Heart right ventricle (tissue), 16 donors: ENCODE measurements at regions of chr1 and their contacts with region 1.

Region 1: DNA sequence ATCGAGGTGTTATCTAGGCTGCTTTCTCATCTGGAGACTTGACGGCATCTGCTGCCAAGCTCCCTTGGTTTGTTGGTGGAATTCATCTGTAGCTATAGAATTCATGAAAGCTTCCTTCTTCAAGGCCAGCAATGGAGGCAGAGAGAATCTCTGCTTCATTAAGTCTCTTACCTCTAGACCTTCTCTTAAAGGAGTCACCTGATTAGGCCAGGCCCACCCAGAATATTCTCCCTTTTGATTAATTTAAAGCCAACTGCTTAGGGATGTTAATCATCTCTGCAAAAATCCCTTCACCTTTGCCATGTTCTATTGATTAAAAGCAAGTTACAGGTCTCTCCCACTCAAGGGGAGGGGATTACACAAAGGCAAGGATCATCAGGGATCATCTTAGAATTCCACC is 5.3 kb upstream of the NCF2 start:
- DNase-seq: no peak
- ATAC-seq: no peak
- H3K4me3 ChIP-seq: no peak overlapping the region
- H3K27ac ChIP-seq: no peak overlapping the region
- H3K4me1 ChIP-seq: peaks cover 0 to 68% (median 5%) of the 10 kb centered on the region in 9 donors
- H3K27me3 ChIP-seq: no peaks in the 10 kb centered on the region
- CTCF ChIP-seq: no peak

Region 2: GRCh38 chr1:183543619-183544204 is 51.8 kb before region 1 on chr1:
- intact Hi-C with region 1: no loop called
- DNase-seq: peak in 1 of 2 donors; percentile 20
- ATAC-seq: peak; percentile 72 to 83 (median 78)
- H3K4me3 ChIP-seq: no peak overlapping the region
- H3K27ac ChIP-seq: peak overlapping the region in 1 of 10 donors; percentile 54
- H3K4me1 ChIP-seq: peaks cover 0 to 43% (median 19%) of the 10 kb centered on the region in 9 donors
- H3K27me3 ChIP-seq: no peaks in the 10 kb centered on the region
- CTCF ChIP-seq: peak; percentile 16 to 73 (median 65)

Region 3: DNA sequence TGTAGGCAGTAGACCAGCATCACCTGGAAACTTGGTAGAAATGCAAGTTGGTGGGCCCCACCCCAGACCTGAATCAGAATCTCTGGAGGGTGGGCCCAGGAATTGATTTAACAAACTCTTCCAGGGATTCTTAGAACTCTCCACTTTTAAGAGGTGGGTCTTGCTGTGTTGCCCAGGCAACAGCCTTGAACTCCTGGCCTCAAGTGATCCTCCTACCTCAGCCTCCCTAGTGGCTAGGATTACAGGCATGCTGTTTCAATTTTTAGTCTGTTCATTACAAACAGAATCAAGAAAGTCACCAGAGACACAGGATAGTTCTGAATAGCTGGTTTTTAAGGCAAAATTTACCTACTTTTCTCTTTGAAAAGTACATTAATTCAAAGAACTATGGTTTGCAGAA is 36.5 kb before region 1 on chr1:
- intact Hi-C with region 1: no loop called
- DNase-seq: no peak
- ATAC-seq: no peak
- H3K4me3 ChIP-seq: no peak overlapping the region
- H3K27ac ChIP-seq: no peak overlapping the region
- H3K4me1 ChIP-seq: no peaks in the 10 kb centered on the region
- H3K27me3 ChIP-seq: no peaks in the 10 kb centered on the region
- CTCF ChIP-seq: no peak

Region 4: DNA sequence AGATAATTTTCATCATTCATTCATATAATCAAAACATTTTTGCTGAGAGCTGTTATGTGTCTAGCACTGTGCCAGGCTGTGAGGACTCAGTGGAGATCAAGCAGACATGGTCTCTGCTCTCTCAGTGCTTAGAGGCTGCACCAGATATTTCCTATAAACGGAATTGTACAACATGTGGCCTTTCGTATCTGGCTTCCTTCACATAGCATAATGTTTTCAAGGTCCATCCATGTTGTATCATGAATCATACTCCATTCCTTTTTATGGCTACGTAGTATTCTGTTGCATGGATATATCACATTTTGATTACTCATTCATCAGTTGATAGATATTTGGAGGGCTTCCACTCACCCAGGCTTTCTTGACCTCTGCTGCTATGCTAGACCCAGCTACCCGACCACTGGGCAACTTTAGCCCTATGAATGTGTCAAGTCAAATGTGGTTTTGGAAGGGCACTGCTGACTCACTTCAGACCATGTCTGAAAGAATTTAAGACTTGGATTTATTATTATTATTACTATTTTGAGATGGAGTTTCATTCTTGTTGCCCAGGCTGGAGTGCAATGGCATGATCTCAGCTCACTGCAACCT is 23.8 kb before region 1 on chr1:
- intact Hi-C with region 1: loop called in 1 of 10 experiments (anchors 2 kb)
- DNase-seq: no peak
- ATAC-seq: no peak
- H3K4me3 ChIP-seq: no peak overlapping the region
- H3K27ac ChIP-seq: no peak overlapping the region
- H3K4me1 ChIP-seq: peaks cover 0 to 41% (median 18%) of the 10 kb centered on the region in 9 donors
- H3K27me3 ChIP-seq: no peaks in the 10 kb centered on the region
- CTCF ChIP-seq: no peak

Region 5: DNA sequence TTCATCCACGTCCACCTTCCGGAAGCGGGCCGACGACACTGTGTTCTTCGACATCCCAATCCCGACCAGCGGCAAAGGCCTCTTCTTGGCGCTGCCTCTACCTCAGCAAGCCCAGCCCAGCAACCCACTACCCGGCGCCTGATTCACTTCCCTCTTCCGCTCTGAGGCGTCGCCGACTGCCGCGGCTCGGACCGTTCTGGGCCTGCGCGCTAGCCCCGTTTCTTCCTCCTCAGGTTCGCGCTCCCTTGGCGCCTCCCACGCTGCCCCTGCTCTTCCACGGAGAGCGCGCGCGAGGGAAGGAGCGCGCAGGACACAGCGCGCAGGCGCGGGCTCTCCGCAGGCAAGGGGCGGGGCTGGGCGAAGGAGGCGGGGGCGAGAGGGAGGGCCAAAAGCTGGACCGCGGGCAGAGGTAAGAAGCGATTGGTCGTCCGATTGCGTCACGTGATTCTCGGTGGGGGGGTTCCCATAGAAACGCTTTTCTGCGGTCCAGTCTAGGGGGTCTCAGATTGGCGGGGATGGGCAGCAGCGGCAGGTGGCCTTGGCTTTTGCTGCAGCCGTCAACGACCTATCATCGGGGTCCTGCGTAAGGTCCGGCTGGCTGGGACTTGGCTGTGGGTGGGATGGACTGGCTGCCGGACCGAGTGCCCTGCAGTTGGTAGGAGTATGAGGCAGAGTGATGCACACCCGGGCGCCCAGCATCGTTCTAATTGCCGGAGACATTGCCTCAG is 40.2 kb after region 1 on chr1 and contains the start of gene ARPC5:
- intact Hi-C with region 1: no loop called
- DNase-seq: peak; percentile 96 to 98
- ATAC-seq: peak; percentile 95 to 98 (median 96)
- H3K4me3 ChIP-seq: peak within 1 kb of the TSS; percentile 67 to 92 (median 86)
- H3K27ac ChIP-seq: peak within 1 kb of the TSS; percentile 68 to 98 (median 94)
- H3K4me1 ChIP-seq: peaks cover 3 to 54% (median 42%) of the 10 kb centered on the region in 9 donors
- H3K27me3 ChIP-seq: no peaks in the 10 kb centered on the region
- CTCF ChIP-seq: no peak
- total RNA-seq, gene ARPC5: 23.8 to 60.2 (median 28.1) TPM

Region 6: DNA sequence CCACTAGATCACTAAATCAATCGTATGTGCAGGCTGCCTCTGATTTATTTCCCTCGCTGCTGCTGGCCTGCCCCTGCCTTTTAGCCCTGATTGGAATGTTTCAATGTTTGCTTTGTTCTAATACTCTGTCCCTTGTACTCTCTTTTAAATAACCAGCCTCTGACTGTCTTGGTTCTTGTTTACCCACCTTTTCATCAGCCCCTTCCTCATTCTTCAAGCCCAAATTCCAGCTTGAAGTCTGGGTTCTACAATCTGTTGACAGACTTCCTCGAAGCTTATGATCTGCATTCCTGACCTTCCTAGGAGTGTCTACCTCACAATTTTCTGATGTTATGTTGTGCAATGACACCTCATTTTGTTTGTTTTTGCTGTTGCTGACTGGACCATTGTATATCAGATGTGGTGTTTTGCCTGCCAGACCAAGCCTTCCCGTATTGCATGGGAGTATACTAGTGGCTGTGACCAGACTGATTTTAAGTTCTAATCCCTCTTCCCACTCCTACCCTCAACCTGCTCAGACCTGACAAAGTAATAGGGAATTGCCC is 104.2 kb after region 1 on chr1:
- intact Hi-C with region 1: no loop called
- DNase-seq: no peak
- ATAC-seq: no peak
- H3K4me3 ChIP-seq: no peak overlapping the region
- H3K27ac ChIP-seq: no peak overlapping the region
- H3K4me1 ChIP-seq: peaks cover 0 to 47% (median 24%) of the 10 kb centered on the region in 9 donors
- H3K27me3 ChIP-seq: no peaks in the 10 kb centered on the region
- CTCF ChIP-seq: no peak